ENCODE measurements at regions of chr17 and their contacts with region 1.

Region 1: DNA sequence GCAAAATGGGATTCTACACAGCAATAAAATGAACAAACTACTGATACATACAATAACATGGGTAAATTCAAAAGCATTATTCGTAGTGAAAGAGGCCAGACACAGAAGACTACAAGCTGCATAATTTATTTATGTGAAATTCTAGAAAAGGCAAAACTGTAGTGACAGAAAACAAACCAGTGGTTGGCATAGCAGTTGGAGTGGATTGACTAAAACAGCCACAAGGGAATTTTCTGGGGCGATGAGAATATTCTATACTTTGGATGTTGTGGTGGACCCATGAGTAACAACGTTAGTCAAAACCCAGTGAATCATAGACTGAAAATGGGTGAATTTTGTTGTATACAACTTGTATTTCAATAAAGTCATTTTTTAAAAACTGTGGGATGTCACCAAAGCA is 63.2 kb upstream of the RPL38 start:
- DNase-seq: no peak
- H3K4me3 ChIP-seq: no peak overlapping the region
- H3K27ac ChIP-seq: no peak overlapping the region
- H3K4me1 ChIP-seq: no peaks in the 10 kb centered on the region
- H3K27me3 ChIP-seq: peaks cover 16% of the 10 kb centered on the region
- CTCF ChIP-seq: no peak
- EP300 ChIP-seq: no peak
- POLR2A ChIP-seq: no peak

Region 2: GRCh38 chr17:72506773-72507172 is 1633.5 kb before region 1 on chr17:
- in situ Hi-C with region 1: no loop called
- intact Hi-C with region 1: loop called (anchors 5 kb)
- DNase-seq: no peak
- H3K4me3 ChIP-seq: no peak overlapping the region
- H3K27ac ChIP-seq: no peak overlapping the region
- H3K4me1 ChIP-seq: peaks cover 4 to 32% (median 27%) of the 10 kb centered on the region in 4 donors
- H3K27me3 ChIP-seq: no peaks in the 10 kb centered on the region
- CTCF ChIP-seq: no peak
- EP300 ChIP-seq: no peak
- POLR2A ChIP-seq: no peak

Region 3: DNA sequence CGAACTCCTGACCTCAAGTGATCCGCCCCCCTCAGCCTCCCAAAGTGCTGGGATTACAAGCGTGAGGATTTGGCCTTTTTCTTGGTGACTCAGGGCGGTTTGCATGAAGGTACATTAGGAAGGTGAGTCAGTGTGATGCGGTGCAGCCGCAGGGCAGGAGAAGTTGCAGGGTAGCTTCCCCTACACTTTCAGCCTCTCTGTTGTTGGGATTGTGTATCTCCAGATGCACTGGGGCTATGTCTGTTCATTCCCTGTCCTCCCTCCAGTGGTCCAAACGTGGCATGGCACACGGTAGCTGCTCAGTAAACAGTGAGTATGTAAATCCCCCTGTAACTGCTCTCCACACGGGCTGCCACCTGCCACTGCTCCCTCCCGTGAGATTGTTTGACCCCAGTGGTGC is 719.4 kb before region 1 on chr17:
- in situ Hi-C with region 1: no loop called
- intact Hi-C with region 1: no loop called
- DNase-seq: no peak
- H3K4me3 ChIP-seq: no peak overlapping the region
- H3K27ac ChIP-seq: no peak overlapping the region
- H3K4me1 ChIP-seq: no peaks in the 10 kb centered on the region
- H3K27me3 ChIP-seq: no peaks in the 10 kb centered on the region
- CTCF ChIP-seq: no peak
- EP300 ChIP-seq: no peak
- POLR2A ChIP-seq: no peak

Region 4: DNA sequence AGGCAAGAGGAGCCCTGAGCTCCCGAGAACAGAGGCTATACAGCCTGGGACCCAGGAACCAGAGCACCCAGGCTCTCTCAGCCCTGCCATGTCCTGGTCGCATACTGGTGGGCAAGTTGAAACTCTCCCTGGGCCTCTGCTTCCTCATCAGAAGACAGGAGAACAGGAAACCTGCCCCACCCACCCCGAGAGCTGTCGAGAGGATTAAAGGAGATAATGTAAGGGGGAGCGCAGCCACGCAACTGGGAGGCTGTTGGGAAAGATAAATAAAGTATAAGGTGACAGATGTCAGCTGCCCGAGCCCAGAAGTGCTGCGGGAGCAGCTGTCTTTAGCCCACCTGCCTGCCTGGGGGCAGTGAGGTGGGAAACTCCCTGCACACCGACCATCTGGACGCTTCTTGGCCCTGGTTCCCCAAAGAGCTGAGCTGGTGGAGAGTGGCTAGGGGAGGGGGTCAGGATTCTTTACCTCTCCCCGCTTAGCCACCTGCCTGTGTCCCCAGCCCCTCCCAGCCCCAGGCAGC is 192.5 kb after region 1 on chr17:
- in situ Hi-C with region 1: no loop called
- intact Hi-C with region 1: no loop called
- DNase-seq: peak; percentile 50
- H3K4me3 ChIP-seq: no peak overlapping the region
- H3K27ac ChIP-seq: peak overlapping the region; percentile 23 to 61 (median 53)
- H3K4me1 ChIP-seq: peaks cover 0 to 4% (median 0%) of the 10 kb centered on the region in 4 donors
- H3K27me3 ChIP-seq: peaks cover 7% of the 10 kb centered on the region
- CTCF ChIP-seq: no peak
- EP300 ChIP-seq: no peak
- POLR2A ChIP-seq: no peak

Measured in transverse colon (tissue), 4 donors.